ENCODE measurements at regions of chr2 and their contacts with region 1.

Region 1: DNA sequence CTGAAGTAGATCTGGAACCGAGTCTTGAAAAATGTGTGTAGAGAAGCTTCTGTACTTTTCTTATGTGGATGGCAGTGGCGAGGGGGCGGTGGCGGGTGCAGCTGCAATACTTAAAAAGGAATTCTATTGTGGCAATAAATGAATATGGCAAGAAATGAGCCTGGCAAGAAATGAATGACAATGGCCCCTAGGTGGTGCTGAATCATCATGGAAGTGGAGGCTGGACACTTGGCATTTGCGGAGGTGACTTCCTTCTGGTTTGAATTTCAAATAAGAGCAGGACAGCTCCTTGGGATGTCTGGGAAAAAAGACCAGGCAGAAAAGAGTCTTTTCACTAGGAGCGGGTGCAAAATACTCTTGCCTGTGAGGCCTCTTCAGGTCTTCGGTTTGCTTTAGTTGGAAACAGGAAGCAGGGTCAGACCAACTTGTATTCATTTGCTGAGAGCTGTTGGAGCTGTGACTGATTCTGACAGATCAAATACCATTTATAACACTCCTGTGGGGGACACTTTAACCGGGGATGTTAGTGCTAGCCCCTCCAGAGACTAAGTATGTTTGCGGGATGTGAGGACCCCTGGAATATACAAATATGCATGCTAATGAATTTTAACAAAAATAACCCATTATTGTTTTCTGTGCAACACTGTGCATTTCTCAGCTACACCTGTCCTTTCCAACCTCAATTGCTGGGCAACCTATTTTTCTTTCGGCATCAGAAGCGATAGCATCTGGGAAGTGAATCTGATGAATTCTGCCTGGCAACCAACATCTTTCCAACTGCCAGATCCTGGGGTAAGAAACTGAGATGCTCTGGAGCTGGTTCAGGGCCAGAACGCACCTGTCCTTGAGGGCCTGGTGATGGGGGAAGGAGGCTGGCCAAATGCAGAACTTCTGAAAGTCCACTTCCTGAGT is 35.4 kb downstream of the FASTKD2 start:
- DNase-seq: peak; percentile 62
- ATAC-seq: peak; percentile 41
- H3K4me3 Mint-ChIP-seq: peak overlapping the region; percentile 2; the same call in 1 of the 2 replicates
- H3K27ac Mint-ChIP-seq: peak overlapping the region; percentile 91
- H3K4me1 Mint-ChIP-seq: peaks cover 67% of the 10 kb centered on the region
- H3K27me3 Mint-ChIP-seq: no peaks in the 10 kb centered on the region
- CTCF ChIP-seq: peak; percentile 48; the same call in 1 of the 2 replicates

Region 2: GRCh38 chr2:206824993-206825392 is 24.2 kb after region 1 on chr2:
- CTCF ChIA-PET with region 1: no interaction called
- POLR2A ChIA-PET with region 1: no interaction called
- DNase-seq: no peak
- ATAC-seq: no peak
- H3K4me3 Mint-ChIP-seq: no peak overlapping the region
- H3K27ac Mint-ChIP-seq: no peak overlapping the region
- H3K4me1 Mint-ChIP-seq: peaks cover 18% of the 10 kb centered on the region
- H3K27me3 Mint-ChIP-seq: no peaks in the 10 kb centered on the region; the same call in 1 of the 2 replicates
- CTCF ChIP-seq: no peak

Region 3: DNA sequence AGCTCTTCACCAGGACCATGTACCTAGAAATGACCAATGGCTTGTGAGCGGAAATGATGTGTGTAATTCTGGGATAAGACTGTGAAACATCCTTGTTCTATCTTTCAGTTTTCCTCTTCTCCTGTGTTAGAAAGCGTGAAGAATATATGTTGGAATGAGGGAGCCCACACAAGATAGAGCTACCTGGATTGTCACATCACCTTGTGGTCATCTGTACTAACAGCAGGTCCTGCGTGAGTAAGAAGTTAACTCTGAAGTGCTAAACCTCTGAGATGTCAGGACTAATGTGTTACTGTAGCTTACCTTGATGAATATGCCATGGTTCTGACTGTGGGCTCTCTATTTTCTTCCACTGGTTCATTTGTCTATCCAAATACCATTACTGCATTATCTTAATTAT is 40.2 kb after region 1 on chr2:
- CTCF ChIA-PET with region 1: interaction called, 26 read pairs
- POLR2A ChIA-PET with region 1: no interaction called
- DNase-seq: no peak
- ATAC-seq: peak; percentile 98
- H3K4me3 Mint-ChIP-seq: no peak overlapping the region
- H3K27ac Mint-ChIP-seq: no peak overlapping the region
- H3K4me1 Mint-ChIP-seq: no peaks in the 10 kb centered on the region
- H3K27me3 Mint-ChIP-seq: no peaks in the 10 kb centered on the region
- CTCF ChIP-seq: no peak

Region 4: DNA sequence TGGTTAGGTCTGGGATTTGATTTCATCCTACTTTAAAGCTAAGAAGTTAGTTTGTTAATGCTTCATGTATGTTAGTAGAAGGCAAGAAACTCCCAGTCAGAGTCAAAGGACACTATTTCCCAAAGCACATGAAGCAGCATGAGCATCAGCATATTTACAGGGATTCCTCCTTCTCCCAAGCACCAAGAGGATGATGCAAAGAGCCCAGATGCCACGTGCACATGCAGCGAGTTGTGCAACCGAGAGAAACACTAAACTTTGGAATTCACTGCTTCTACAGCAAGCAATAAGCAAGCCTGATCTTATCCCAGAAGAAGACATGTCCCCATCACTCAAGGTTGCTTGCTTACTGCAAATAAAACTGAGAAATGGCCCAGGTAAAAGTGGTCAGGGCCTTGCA is 171.0 kb after region 1 on chr2:
- CTCF ChIA-PET with region 1: interaction called, 10 read pairs
- POLR2A ChIA-PET with region 1: no interaction called
- DNase-seq: no peak
- ATAC-seq: no peak
- H3K4me3 Mint-ChIP-seq: no peak overlapping the region
- H3K27ac Mint-ChIP-seq: no peak overlapping the region
- H3K4me1 Mint-ChIP-seq: peaks cover 24% of the 10 kb centered on the region
- H3K27me3 Mint-ChIP-seq: no peaks in the 10 kb centered on the region; the same call in 1 of the 2 replicates
- CTCF ChIP-seq: no peak

Region 5: DNA sequence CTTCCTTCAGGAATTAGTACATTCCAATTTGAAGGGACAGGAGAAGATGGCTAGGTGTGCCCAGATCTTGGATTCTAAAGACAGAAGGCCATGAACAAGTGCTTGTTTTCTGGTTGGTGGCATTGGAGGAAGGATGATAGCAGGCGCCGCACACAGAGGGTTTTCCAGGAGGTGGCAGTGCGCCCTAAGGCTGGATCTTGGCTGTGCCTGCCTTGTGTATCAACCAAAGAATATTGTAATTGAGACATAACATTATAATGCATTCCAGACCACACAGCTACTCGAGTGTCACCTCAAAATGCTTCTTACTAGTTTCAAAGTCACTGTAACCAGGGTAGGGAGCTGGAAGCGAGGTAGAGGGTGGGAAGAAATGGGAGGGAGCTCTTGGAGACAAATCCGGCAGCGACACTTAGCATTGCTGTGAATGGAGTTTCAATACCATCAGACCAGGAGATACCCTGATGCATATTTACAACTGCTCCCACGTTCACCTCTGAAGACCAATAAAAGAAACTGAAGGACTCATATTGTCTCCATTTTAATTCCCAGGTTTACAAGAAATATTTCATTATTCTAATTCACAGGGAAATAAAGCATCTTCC is 181.1 kb after region 1 on chr2:
- CTCF ChIA-PET with region 1: interaction called, 15 read pairs
- POLR2A ChIA-PET with region 1: no interaction called
- DNase-seq: peak; percentile 72
- ATAC-seq: peak; percentile 84
- H3K4me3 Mint-ChIP-seq: no peak overlapping the region
- H3K27ac Mint-ChIP-seq: no peak overlapping the region
- H3K4me1 Mint-ChIP-seq: peaks cover 35% of the 10 kb centered on the region
- H3K27me3 Mint-ChIP-seq: no peaks in the 10 kb centered on the region
- CTCF ChIP-seq: peak; percentile 33; the same call in 1 of the 2 replicates

Region 6: DNA sequence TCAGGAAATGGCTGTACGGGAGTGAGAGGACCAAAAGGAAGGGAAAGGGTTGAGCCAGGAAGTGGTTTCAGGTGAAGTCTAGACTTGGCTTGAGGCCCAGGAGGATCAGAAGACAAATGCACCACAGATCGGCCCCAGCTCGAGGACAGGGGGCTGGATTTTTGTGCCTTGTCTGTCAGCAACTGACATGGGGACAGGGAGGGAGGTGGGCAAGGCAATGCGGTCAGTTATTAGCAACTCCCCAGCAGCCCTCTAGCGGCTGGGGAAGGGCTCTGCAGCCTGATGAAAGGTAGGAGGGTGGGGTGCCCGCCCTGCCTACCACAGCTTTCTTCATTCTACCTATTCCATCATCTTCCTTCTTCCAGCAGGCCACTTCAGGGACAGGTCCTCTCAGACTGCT is 188.5 kb after region 1 on chr2:
- CTCF ChIA-PET with region 1: interaction called, 15 read pairs
- POLR2A ChIA-PET with region 1: no interaction called
- DNase-seq: peak; percentile 52
- ATAC-seq: peak; percentile 98
- H3K4me3 Mint-ChIP-seq: no peak overlapping the region
- H3K27ac Mint-ChIP-seq: no peak overlapping the region
- H3K4me1 Mint-ChIP-seq: peaks cover 10% of the 10 kb centered on the region
- H3K27me3 Mint-ChIP-seq: no peaks in the 10 kb centered on the region
- CTCF ChIP-seq: peak; percentile 92

Region 7: DNA sequence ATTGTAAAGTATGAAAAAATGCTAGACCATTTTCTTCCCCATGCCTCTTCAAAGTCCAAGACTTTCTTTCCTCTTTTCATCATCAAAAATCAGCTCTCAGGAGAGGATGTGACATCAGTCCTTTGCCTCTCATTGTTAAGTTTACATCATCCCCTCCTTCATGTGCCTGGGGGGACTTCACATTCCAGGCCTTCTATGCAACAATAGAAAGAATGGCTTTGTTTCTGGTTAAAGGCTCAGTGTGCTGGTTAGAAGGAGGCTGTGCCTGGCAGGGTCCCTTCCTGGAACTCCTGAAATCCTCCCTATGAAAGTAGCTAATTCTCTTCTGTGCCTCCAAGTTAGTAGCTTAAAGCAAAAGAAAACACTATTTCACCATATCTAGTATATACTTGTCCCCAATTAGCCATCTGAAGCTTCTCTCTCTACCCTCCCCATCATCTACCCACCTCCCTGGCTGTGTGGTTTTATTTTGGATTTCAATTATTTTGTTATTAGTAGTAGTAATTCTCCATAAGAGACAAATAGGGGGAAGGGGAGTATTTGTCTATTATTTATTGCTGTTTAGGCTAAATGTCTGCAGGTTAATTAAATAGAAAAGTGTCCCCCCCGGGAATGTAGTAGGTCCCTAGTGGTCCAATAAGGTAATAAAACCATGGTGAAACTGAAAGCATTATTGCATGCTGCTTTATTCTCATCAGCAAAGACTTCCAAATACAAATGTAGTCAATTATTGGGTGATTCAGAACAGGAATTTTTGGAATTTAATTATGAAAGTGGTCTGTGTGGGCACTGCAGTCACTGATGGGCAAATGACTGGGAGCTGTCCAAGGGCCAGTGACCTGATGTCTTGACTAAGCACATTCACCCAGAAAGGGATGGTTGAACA is 207.6 kb after region 1 on chr2:
- CTCF ChIA-PET with region 1: interaction called, 10 read pairs
- POLR2A ChIA-PET with region 1: no interaction called
- DNase-seq: peak; percentile 29
- ATAC-seq: peak; percentile 96
- H3K4me3 Mint-ChIP-seq: no peak overlapping the region
- H3K27ac Mint-ChIP-seq: peak overlapping the region; percentile 88
- H3K4me1 Mint-ChIP-seq: peaks cover 40% of the 10 kb centered on the region
- H3K27me3 Mint-ChIP-seq: no peaks in the 10 kb centered on the region
- CTCF ChIP-seq: no peak

Region 8: GRCh38 chr2:207473049-207473930 is 672.5 kb after region 1 on chr2:
- CTCF ChIA-PET with region 1: interaction called, 34 read pairs
- POLR2A ChIA-PET with region 1: no interaction called
- DNase-seq: peak; percentile 40
- ATAC-seq: peak; percentile 89
- H3K4me3 Mint-ChIP-seq: no peak overlapping the region
- H3K27ac Mint-ChIP-seq: peak overlapping the region; percentile 64
- H3K4me1 Mint-ChIP-seq: peaks cover 46% of the 10 kb centered on the region
- H3K27me3 Mint-ChIP-seq: no peaks in the 10 kb centered on the region
- CTCF ChIP-seq: no peak